Activated naive CD4-positive, alpha-beta T cell treated with anti-CD3 and anti-CD28 coated beads for 36 hours (primary cell): ENCODE measurements at regions of chr20 and their contacts with region 1.

Region 1: DNA sequence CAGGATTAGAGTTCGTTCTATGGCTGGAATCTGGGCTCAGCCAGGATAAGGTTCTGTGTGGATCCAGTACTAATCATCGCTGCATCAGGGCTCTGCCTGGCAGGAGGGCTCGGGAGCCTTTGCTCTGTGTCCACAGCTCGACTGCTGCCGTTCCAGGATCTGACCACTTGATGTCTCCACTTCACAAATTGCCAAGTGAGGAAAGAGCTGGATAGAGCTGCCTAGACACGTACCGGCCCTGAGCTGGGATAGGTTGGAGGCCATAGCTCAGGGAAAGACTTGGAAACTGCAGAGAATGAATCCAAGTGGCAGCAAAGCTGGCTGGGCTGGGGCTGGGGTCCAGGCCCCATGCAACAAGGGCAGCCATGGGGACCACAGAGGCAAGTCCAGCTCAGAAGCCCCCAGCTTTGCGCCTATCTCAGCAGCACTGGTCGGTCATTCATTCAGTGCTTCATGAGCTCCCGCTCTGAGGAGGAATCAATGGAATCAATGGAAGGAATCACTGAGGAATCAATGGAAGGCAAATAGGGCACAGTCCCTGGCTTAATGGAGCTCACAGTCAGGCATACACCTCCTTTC is 38.0 kb upstream of the TOP1 start:
- DNase-seq: peak; percentile 89
- H3K4me3 Mint-ChIP-seq: no peak overlapping the region
- H3K27ac Mint-ChIP-seq: peak overlapping the region; percentile 72
- H3K4me1 Mint-ChIP-seq: peaks cover 21% of the 10 kb centered on the region
- H3K27me3 Mint-ChIP-seq: no peaks in the 10 kb centered on the region

Region 2: GRCh38 chr20:40970201-40970600 is 20.4 kb before region 1 on chr20:
- CTCF ChIA-PET with region 1: interaction called, 29 read pairs
- intact Hi-C with region 1: no loop called
- DNase-seq: no peak
- H3K4me3 Mint-ChIP-seq: no peak overlapping the region
- H3K27ac Mint-ChIP-seq: no peak overlapping the region
- H3K4me1 Mint-ChIP-seq: peaks cover 6% of the 10 kb centered on the region
- H3K27me3 Mint-ChIP-seq: peaks cover 5% of the 10 kb centered on the region

Region 3: GRCh38 chr20:41028348-41029148 is 37.9 kb after region 1 on chr20 and contains the start of gene TOP1:
- CTCF ChIA-PET with region 1: interaction called, 8 read pairs
- intact Hi-C with region 1: loop called (anchors 1 kb)
- DNase-seq: peak; percentile 100
- H3K4me3 Mint-ChIP-seq: peak within 1 kb of the TSS; percentile 86
- H3K27ac Mint-ChIP-seq: peak within 1 kb of the TSS; percentile 90
- H3K4me1 Mint-ChIP-seq: peaks cover 42% of the 10 kb centered on the region
- H3K27me3 Mint-ChIP-seq: no peaks in the 10 kb centered on the region
- total RNA-seq, gene TOP1: 91.7 to 92.6 TPM

Region 4: DNA sequence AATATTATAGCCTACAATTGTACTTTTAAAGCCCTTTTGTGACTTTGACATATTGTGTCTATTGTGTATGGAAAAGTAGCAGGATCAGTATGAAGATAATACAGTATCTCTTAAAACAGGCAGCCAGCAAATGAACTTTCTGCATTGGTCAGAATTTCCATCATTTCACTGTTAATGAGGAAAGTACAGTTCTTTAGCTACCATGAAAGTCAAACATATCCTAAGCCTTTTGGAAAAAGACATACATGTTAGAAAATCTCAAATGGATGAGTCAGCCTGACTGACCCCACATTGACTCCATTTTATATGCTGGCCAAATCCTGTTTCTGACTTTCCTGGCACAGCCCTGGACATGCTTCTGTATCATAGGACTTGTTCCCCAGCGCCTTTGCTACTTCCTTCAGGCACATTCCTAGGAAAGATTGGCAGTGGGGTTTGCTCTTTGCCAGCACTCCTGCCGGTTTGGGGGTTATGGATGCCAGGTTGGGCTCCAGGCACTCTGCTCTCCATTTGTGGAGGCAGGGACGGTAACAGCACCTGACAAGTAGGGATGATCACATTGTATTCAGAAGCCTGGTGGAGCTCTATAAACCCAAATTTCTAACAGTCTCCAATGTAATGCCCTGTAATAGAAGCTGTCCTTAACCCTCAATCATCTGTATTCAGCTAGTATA is 81.7 kb after region 1 on chr20:
- CTCF ChIA-PET with region 1: interaction called, 20 read pairs
- intact Hi-C with region 1: no loop called
- DNase-seq: no peak
- H3K4me3 Mint-ChIP-seq: no peak overlapping the region
- H3K27ac Mint-ChIP-seq: peak overlapping the region; percentile 82
- H3K4me1 Mint-ChIP-seq: peaks cover 78% of the 10 kb centered on the region
- H3K27me3 Mint-ChIP-seq: no peaks in the 10 kb centered on the region

Region 5: GRCh38 chr20:41095110-41095969 is 104.7 kb after region 1 on chr20:
- CTCF ChIA-PET with region 1: interaction called, 229 read pairs
- intact Hi-C with region 1: loop called (anchors 1 kb)
- DNase-seq: peak; percentile 70
- H3K4me3 Mint-ChIP-seq: no peak overlapping the region
- H3K27ac Mint-ChIP-seq: peak overlapping the region; percentile 61
- H3K4me1 Mint-ChIP-seq: peaks cover 14% of the 10 kb centered on the region
- H3K27me3 Mint-ChIP-seq: no peaks in the 10 kb centered on the region

Region 6: DNA sequence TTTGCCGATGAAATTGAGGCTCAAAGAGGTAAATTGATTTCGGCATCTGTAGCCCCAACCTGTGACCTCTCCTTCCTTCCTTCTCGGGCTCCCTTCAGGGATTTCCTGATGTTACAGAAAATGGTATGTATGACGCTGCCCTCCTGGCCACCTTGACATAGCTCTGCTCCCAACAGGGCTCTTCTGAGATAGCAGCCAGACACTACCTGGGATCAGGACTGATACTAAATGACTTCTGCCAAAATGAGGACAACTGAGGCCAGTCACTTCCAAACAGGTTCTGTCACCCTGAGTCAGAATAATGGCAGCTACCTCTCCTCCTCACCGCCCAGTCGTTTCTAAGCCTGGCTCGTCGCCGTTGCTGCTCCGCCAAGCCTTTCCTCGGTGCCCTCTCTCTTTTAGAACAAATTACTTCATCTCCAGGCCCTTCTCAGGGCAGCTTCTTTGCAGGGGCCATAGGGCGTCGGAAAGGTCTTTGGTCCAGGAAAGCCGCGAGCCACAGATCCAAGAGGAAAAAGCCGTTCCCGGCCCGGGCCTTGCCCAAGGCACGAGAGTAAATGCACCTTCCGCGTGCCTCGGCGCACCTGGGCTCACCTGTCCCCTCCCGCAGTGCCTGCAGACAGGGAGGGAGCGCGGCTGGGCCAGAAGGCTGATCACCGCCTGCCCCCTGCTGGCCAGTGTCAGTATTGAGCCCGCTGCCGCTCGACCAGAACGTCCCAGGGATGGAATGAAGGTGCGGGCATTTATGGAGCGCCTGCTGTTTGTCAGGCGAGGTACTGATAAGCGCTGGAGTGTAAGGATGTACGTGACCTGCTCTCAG is 349.1 kb after region 1 on chr20:
- CTCF ChIA-PET with region 1: interaction called, 4 read pairs
- intact Hi-C with region 1: loop called (anchors 5 kb)
- DNase-seq: peak; percentile 87
- H3K4me3 Mint-ChIP-seq: peak overlapping the region; percentile 73
- H3K27ac Mint-ChIP-seq: no peak overlapping the region
- H3K4me1 Mint-ChIP-seq: peaks cover 11% of the 10 kb centered on the region
- H3K27me3 Mint-ChIP-seq: peaks cover 2% of the 10 kb centered on the region